ENCODE measurements at regions of chr3 and their contacts with region 1.

Region 1: DNA sequence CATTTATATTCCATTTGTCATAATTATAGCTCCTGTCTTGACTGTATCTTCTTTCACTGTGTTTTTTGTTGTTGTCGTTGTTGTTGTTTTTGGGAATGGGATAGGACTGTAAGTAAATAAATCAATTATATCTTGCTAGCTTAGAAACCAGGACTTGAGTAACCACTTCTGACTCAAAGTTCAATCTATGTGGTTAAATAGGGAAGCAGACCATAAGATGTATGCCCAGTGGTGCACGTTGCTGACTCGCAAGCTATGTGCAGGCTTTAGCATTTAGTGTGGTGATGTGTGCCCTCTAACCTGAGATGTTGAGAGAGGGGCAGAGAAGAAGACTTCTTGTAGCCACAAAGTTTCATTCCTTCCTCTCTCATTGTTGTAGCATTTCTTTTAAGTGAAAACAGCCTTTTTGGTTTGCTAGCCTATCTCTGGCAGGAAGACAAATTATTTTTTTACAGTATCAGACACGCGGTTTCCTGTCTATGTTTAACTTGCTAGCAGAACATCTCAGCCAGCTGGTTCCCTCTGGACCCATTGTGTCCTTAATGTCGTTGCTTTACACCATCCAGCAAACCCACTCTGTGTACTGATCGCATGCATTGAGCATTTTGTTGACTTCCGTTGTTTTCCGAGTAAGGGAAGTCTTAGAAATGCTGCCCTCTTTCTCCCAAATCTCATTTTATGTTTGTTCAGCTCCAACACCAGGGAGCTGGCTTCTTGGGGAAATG is 52.1 kb downstream of the TGFBR2 start:
- DNase-seq: peak in 13 of 14 experiments; percentile 28 to 83 (median 47)
- ATAC-seq: peak; percentile 54
- H3K4me3 ChIP-seq: peak overlapping the region; percentile 6
- H3K4me3 Mint-ChIP-seq: peak overlapping the region; percentile 88
- H3K27ac ChIP-seq: peak overlapping the region; percentile 85 to 96
- H3K27ac Mint-ChIP-seq: peak overlapping the region; percentile 96
- H3K4me1 ChIP-seq: peaks cover 80% of the 10 kb centered on the region
- H3K4me1 Mint-ChIP-seq: peaks cover 93% of the 10 kb centered on the region
- H3K27me3 ChIP-seq: no peaks in the 10 kb centered on the region
- H3K27me3 Mint-ChIP-seq: no peaks in the 10 kb centered on the region
- CTCF ChIP-seq: no peak

Region 2: DNA sequence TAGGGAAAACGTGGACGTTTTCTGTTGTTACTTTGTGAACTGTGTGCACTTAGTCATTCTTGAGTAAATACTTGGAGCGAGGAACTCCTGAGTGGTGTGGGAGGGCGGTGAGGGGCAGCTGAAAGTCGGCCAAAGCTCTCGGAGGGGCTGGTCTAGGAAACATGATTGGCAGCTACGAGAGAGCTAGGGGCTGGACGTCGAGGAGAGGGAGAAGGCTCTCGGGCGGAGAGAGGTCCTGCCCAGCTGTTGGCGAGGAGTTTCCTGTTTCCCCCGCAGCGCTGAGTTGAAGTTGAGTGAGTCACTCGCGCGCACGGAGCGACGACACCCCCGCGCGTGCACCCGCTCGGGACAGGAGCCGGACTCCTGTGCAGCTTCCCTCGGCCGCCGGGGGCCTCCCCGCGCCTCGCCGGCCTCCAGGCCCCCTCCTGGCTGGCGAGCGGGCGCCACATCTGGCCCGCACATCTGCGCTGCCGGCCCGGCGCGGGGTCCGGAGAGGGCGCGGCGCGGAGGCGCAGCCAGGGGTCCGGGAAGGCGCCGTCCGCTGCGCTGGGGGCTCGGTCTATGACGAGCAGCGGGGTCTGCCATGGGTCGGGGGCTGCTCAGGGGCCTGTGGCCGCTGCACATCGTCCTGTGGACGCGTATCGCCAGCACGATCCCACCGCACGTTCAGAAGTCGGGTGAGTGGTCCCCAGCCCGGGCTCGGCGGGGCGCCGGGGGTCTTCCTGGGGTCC is 52.0 kb before region 1 on chr3 and contains the start of gene TGFBR2:
- CTCF ChIA-PET with region 1: interaction called, 13 read pairs
- POLR2A ChIA-PET with region 1: interaction called, 176 read pairs
- intact Hi-C with region 1: loop called in 1 of 2 experiments (anchors 1 kb)
- DNase-seq: peak; percentile 61 to 91 (median 79)
- ATAC-seq: peak; percentile 62
- H3K4me3 ChIP-seq: peak within 1 kb of the TSS; percentile 73
- H3K4me3 Mint-ChIP-seq: peak within 1 kb of the TSS; percentile 99
- H3K27ac ChIP-seq: peak within 1 kb of the TSS; percentile 61 to 91
- H3K27ac Mint-ChIP-seq: peak within 1 kb of the TSS; percentile 96
- H3K4me1 ChIP-seq: peaks cover 28% of the 10 kb centered on the region
- H3K4me1 Mint-ChIP-seq: peaks cover 63% of the 10 kb centered on the region
- H3K27me3 ChIP-seq: no peaks in the 10 kb centered on the region
- H3K27me3 Mint-ChIP-seq: no peaks in the 10 kb centered on the region
- CTCF ChIP-seq: no peak
- total RNA-seq, gene TGFBR2: 203 to 205 TPM

Region 3: DNA sequence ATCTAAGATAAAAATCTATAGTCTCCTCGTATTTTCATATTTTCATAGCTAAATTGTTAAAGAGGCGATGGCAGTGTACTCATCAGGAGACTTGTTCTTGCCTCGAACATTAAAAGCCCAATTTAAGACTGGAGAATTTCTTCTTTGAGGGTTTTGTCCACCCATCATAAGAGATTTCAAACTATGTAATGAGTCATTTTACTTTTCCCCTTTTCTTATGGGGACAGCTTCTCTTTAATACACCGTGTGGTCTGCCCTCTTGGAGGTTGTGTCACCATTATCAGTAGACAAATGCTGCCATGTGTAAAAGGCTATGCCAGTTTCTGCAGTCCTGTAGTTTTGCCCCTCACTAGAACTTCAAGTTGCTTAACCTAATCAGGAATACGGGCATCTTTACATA is 35.1 kb before region 1 on chr3:
- CTCF ChIA-PET with region 1: interaction called, 10 read pairs
- POLR2A ChIA-PET with region 1: interaction called, 55 read pairs
- intact Hi-C with region 1: no loop called
- DNase-seq: peak in 1 of 14 experiments; percentile 42
- ATAC-seq: no peak
- H3K4me3 ChIP-seq: no peak overlapping the region
- H3K4me3 Mint-ChIP-seq: peak overlapping the region; percentile 66
- H3K27ac ChIP-seq: peak overlapping the region; percentile 25 to 38
- H3K27ac Mint-ChIP-seq: peak overlapping the region; percentile 96
- H3K4me1 ChIP-seq: peaks cover 65% of the 10 kb centered on the region
- H3K4me1 Mint-ChIP-seq: peaks cover 98% of the 10 kb centered on the region
- H3K27me3 ChIP-seq: no peaks in the 10 kb centered on the region
- H3K27me3 Mint-ChIP-seq: no peaks in the 10 kb centered on the region
- CTCF ChIP-seq: no peak

Region 4: DNA sequence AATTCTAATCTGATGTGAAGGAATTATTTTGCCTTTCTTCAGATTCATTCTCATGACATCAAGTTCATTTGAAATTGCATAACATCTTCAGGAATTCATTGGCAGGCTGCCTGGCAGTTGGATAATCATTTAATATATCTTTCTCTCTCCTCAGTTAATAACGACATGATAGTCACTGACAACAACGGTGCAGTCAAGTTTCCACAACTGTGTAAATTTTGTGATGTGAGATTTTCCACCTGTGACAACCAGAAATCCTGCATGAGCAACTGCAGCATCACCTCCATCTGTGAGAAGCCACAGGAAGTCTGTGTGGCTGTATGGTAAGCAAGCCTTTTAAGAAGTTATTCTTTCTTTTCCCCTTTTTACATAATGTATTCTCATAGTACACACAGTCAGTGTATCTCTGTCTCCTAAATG is 13.9 kb before region 1 on chr3:
- CTCF ChIA-PET with region 1: interaction called, 7 read pairs
- POLR2A ChIA-PET with region 1: interaction called, 297 read pairs
- intact Hi-C with region 1: loop called in 1 of 2 experiments (anchors 1 kb)
- DNase-seq: peak in 10 of 14 experiments; percentile 26 to 87 (median 50)
- ATAC-seq: peak; percentile 62
- H3K4me3 ChIP-seq: peak overlapping the region; percentile 14
- H3K4me3 Mint-ChIP-seq: peak overlapping the region; percentile 79
- H3K27ac ChIP-seq: peak overlapping the region; percentile 72 to 76
- H3K27ac Mint-ChIP-seq: peak overlapping the region; percentile 96
- H3K4me1 ChIP-seq: peaks cover 85% of the 10 kb centered on the region
- H3K4me1 Mint-ChIP-seq: peaks cover 99% of the 10 kb centered on the region
- H3K27me3 ChIP-seq: no peaks in the 10 kb centered on the region
- H3K27me3 Mint-ChIP-seq: no peaks in the 10 kb centered on the region
- CTCF ChIP-seq: no peak

Region 5: DNA sequence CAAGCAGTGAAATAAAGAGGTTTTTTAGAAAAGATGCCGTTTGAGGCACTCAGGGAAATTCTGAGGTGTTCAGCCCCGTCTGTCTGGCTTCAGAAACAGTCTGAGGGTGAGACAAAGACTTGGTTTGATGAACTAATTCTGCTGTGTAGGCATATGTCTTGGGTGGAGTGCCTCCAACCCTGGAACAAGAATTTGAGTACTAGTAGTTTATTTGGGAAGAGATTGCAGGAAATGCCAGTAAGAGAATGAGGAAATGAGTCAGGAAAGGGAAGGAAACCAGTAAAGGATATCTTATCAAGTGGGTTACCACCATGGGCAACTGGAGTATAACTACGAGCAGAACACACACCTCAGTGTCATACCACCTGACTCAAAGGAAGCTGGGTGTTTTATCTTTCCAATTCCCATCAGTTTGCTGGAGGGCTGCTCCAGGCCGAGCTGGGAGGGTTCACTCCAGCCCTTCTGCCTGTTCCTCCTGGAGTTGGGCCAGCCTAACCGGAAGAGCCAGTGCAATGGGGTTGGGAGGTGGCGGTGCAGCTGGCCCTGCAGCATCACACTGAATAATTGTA is 23.2 kb after region 1 on chr3:
- CTCF ChIA-PET with region 1: interaction called, 5 read pairs
- POLR2A ChIA-PET with region 1: interaction called, 33 read pairs
- intact Hi-C with region 1: loop called in 1 of 2 experiments (anchors 2 kb)
- DNase-seq: no peak
- ATAC-seq: peak; percentile 53
- H3K4me3 ChIP-seq: no peak overlapping the region
- H3K4me3 Mint-ChIP-seq: peak overlapping the region; percentile 57
- H3K27ac ChIP-seq: peak overlapping the region; percentile 13 to 19
- H3K27ac Mint-ChIP-seq: peak overlapping the region; percentile 86
- H3K4me1 ChIP-seq: peaks cover 52% of the 10 kb centered on the region
- H3K4me1 Mint-ChIP-seq: peaks cover 95% of the 10 kb centered on the region
- H3K27me3 ChIP-seq: no peaks in the 10 kb centered on the region
- H3K27me3 Mint-ChIP-seq: no peaks in the 10 kb centered on the region
- CTCF ChIP-seq: no peak